ENCODE measurements at regions of chr5 and their contacts with region 1.

Region 1: GRCh38 chr5:32174011-32174870 is at the start of gene GOLPH3:
- DNase-seq: peak; percentile 90
- H3K4me3 Mint-ChIP-seq: peak within 1 kb of the TSS; percentile 98
- H3K27ac Mint-ChIP-seq: peak within 1 kb of the TSS; percentile 99
- H3K4me1 Mint-ChIP-seq: peaks cover 29% of the 10 kb centered on the region
- H3K27me3 Mint-ChIP-seq: peaks cover 2% of the 10 kb centered on the region
- total RNA-seq, gene GOLPH3: 80.1 and 81.5 TPM in 2 replicates

Region 2: DNA sequence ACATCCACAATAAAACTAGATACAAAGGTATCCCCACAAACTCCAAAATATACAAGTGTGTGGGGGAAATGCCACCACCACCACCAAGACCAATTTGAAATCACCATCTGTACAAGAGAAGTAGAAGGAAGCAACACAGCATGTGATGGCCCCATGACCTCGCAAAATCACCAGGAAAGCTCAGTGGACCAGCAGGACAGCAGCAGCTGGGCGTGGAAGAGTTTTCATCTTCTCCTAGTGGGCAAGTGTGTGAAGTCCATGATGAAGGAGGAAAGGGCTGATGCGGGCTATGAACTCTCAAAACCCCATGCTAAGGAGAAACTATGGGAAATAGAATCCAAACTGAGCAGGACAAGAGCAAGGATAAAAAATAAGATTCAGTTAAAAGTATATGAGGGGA is 58.3 kb before region 1 on chr5:
- intact Hi-C with region 1: loop called (anchors 5 kb)
- DNase-seq: no peak
- H3K4me3 Mint-ChIP-seq: no peak overlapping the region
- H3K27ac Mint-ChIP-seq: peak overlapping the region; percentile 77
- H3K4me1 Mint-ChIP-seq: peaks cover 32% of the 10 kb centered on the region
- H3K27me3 Mint-ChIP-seq: no peaks in the 10 kb centered on the region

Region 3: DNA sequence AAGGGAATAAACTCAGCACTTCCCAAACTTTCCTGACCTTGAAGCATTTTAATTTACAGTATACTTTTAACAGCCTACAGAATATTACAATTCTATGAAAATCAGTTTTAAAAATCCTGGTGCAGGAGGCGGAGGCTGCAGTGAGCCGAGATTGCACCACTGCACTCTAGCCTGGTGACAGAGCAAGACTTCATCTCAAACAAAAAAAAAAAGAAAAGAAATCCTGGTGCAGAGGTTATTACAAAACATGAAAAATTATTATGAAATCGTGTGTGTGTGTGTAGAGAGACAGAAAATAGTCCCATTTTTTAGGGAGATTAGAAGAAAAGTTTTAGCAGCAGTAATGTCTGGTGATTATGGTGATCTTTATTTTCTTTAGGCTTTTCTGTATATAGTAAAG is 27.0 kb before region 1 on chr5:
- intact Hi-C with region 1: no loop called
- DNase-seq: no peak
- H3K4me3 Mint-ChIP-seq: no peak overlapping the region
- H3K27ac Mint-ChIP-seq: peak overlapping the region; percentile 9
- H3K4me1 Mint-ChIP-seq: peaks cover 27% of the 10 kb centered on the region
- H3K27me3 Mint-ChIP-seq: no peaks in the 10 kb centered on the region

Region 4: GRCh38 chr5:32206509-32207354 is 32.5 kb after region 1 on chr5:
- intact Hi-C with region 1: loop called (anchors 1 kb)
- DNase-seq: no peak
- H3K4me3 Mint-ChIP-seq: no peak overlapping the region
- H3K27ac Mint-ChIP-seq: peak overlapping the region; percentile 38
- H3K4me1 Mint-ChIP-seq: peaks cover 23% of the 10 kb centered on the region
- H3K27me3 Mint-ChIP-seq: no peaks in the 10 kb centered on the region

Region 5: GRCh38 chr5:32280656-32281081 is 106.4 kb after region 1 on chr5:
- intact Hi-C with region 1: loop called (anchors 2 kb)
- DNase-seq: no peak
- H3K4me3 Mint-ChIP-seq: peak overlapping the region; percentile 7
- H3K27ac Mint-ChIP-seq: peak overlapping the region; percentile 93
- H3K4me1 Mint-ChIP-seq: peaks cover 54% of the 10 kb centered on the region
- H3K27me3 Mint-ChIP-seq: no peaks in the 10 kb centered on the region

Region 6: DNA sequence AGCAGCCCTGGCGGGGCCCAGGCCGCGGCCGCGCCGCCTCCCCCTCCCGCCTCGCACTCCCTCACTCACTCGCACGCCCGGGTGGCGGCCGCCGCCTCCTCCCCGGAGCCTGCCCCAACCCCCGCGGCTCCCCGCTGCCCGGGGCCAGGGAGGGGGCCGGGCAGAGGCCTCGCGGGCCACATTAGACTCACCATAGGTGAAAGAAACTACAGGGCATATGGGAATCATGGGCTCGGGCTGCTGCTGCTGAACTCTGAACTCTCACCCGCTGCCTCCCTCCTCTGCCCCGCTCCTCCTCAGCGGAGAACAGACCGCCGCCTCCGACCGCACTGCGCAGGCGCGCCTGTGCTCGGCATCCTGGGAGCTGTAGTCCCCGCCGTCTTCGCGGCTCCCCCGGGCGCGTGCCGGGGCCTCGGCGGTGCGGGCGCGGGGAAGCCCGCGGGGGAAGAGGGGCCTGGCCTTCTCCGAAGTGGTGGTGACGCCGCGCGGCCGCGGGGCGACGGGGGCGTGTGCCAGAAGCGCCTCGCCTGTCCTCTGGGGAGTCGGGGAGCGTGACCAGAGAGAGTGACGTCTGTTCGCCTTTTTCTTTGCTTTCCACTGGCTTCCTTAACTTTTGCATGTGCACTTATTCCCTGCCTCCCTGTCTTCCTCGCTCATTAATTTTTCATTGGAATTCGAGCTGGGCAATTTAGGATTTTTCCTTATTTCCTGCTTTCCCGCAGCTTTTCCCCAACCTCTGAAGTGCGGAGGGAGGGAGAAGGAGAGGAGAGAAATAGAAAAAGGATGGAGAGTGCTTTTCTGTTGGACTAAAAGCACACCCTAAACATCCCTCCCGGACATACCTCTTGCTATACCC is 270.4 kb after region 1 on chr5 and contains the start of gene ZFR:
- intact Hi-C with region 1: loop called (anchors 5 kb)
- DNase-seq: peak; percentile 91
- H3K4me3 Mint-ChIP-seq: peak within 1 kb of the TSS; percentile 93
- H3K27ac Mint-ChIP-seq: peak within 1 kb of the TSS; percentile 93
- H3K4me1 Mint-ChIP-seq: peaks cover 30% of the 10 kb centered on the region
- H3K27me3 Mint-ChIP-seq: peaks cover 17% of the 10 kb centered on the region
- total RNA-seq, gene ZFR: 68.6 and 69.2 TPM in 2 replicates

Region 7: GRCh38 chr5:32585446-32586275 is 411.4 kb after region 1 on chr5 and contains the start of gene SUB1:
- intact Hi-C with region 1: loop called (anchors 5 kb)
- DNase-seq: peak; percentile 90
- H3K4me3 Mint-ChIP-seq: peak within 1 kb of the TSS; percentile 96
- H3K27ac Mint-ChIP-seq: peak within 1 kb of the TSS; percentile 99
- H3K4me1 Mint-ChIP-seq: peaks cover 55% of the 10 kb centered on the region
- H3K27me3 Mint-ChIP-seq: no peaks in the 10 kb centered on the region
- total RNA-seq, gene SUB1: 380 and 404 TPM in 2 replicates

Measured in activated T-helper 2 cell treated with anti-CD3 and anti-CD28 coated beads, Interferon-gamma antibody, Interleukin-2, Interleukin-4, amounts not matched to agents 10 μg/mL and 5 μg/mL and 100 μg/mL, durations not matched to agents 14 hours and 24 hours and 36 hours (primary cell).